ENCODE measurements at regions of chr4 and their contacts with region 1.

Region 1: GRCh38 chr4:184825896-184826690 is at the start of gene ACSL1:
- DNase-seq: peak; percentile 81 to 96 (median 94)
- ATAC-seq: peak; percentile 89
- H3K4me3 ChIP-seq: peak within 1 kb of the TSS; percentile 64
- H3K27ac ChIP-seq: peak within 1 kb of the TSS; percentile 61; the same call in 2 of the 3 replicates
- H3K4me1 ChIP-seq: peaks cover 21 to 26% of the 10 kb centered on the region in 2 experiments
- H3K27me3 ChIP-seq: no peaks in the 10 kb centered on the region
- CTCF ChIP-seq: 0 out of 6 replicates have a peak, but pooled peaks of 1 of the 3 experiments have one; percentile 6
- EP300 ChIP-seq: no peak
- POLR2A ChIP-seq: no peak
- RAD21 ChIP-seq: no peak
- polyA plus RNA-seq, gene ACSL1: 10.2 to 11.3 TPM

Region 2: GRCh38 chr4:184782731-184783373 is 43.2 kb before region 1 on chr4:
- CTCF ChIA-PET with region 1: no interaction called
- POLR2A ChIA-PET with region 1: no interaction called
- in situ Hi-C with region 1: no loop called
- intact Hi-C with region 1: no loop called
- DNase-seq: no peak
- ATAC-seq: no peak
- H3K4me3 ChIP-seq: no peak overlapping the region
- H3K27ac ChIP-seq: no peak overlapping the region
- H3K4me1 ChIP-seq: no peaks in the 10 kb centered on the region
- H3K27me3 ChIP-seq: no peaks in the 10 kb centered on the region
- CTCF ChIP-seq: no peak
- EP300 ChIP-seq: no peak
- POLR2A ChIP-seq: no peak
- RAD21 ChIP-seq: no peak

Region 3: DNA sequence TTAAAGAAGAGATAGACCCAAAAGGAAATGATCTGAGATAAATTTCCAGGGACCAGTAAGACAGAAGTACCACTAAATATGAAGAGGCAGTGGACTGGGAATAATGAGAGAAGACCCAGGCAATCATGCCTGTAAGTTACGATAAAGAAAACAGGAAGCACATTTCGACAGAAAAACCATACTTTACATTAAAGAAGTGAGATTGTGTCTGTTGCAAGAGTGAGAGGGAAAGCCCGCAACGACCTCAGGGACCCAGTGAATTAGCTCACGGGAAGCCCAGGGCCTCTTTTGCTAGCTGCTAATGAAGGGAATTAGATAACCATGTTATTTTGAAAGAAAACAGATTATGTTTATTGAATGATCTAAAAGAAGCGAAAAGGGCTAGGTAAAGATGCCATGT is 28.6 kb after region 1 on chr4:
- CTCF ChIA-PET with region 1: no interaction called
- POLR2A ChIA-PET with region 1: no interaction called
- in situ Hi-C with region 1: no loop called
- intact Hi-C with region 1: loop called (anchors 2 kb)
- DNase-seq: peak in 2 of 4 experiments; percentile 37 to 64
- ATAC-seq: peak; percentile 78
- H3K4me3 ChIP-seq: peak overlapping the region; percentile 24; the same call in 1 of the 2 replicates
- H3K27ac ChIP-seq: peak overlapping the region; percentile 91
- H3K4me1 ChIP-seq: peaks cover 15 to 20% of the 10 kb centered on the region in 2 experiments
- H3K27me3 ChIP-seq: no peaks in the 10 kb centered on the region
- CTCF ChIP-seq: no peak
- EP300 ChIP-seq: peak; percentile 77
- POLR2A ChIP-seq: no peak
- RAD21 ChIP-seq: no peak

Region 4: GRCh38 chr4:184899261-184900134 is 73.4 kb after region 1 on chr4:
- CTCF ChIA-PET with region 1: no interaction called
- POLR2A ChIA-PET with region 1: no interaction called
- in situ Hi-C with region 1: no loop called
- intact Hi-C with region 1: loop called (anchors 10 kb)
- DNase-seq: no peak
- ATAC-seq: no peak
- H3K4me3 ChIP-seq: no peak overlapping the region
- H3K27ac ChIP-seq: no peak overlapping the region
- H3K4me1 ChIP-seq: no peaks in the 10 kb centered on the region; a peak in 1 of 5 replicates
- H3K27me3 ChIP-seq: peaks cover 0 to 38% of the 10 kb centered on the region in 2 experiments; a peak in 4 of 5 replicates
- CTCF ChIP-seq: no peak
- EP300 ChIP-seq: no peak
- POLR2A ChIP-seq: no peak
- RAD21 ChIP-seq: no peak

Region 5: GRCh38 chr4:185332575-185333464 is 506.7 kb after region 1 on chr4:
- CTCF ChIA-PET with region 1: no interaction called
- POLR2A ChIA-PET with region 1: no interaction called
- in situ Hi-C with region 1: no loop called
- intact Hi-C with region 1: no loop called
- DNase-seq: no peak
- ATAC-seq: no peak
- H3K4me3 ChIP-seq: no peak overlapping the region
- H3K27ac ChIP-seq: no peak overlapping the region
- H3K4me1 ChIP-seq: peaks cover 0 to 2% of the 10 kb centered on the region in 2 experiments; a peak in 1 of 5 replicates
- H3K27me3 ChIP-seq: no peaks in the 10 kb centered on the region
- CTCF ChIP-seq: no peak
- EP300 ChIP-seq: no peak
- POLR2A ChIP-seq: no peak
- RAD21 ChIP-seq: no peak